Left ventricle myocardium superior (tissue), 1 donor: ENCODE measurements at regions of chrX and their contacts with region 1.

Region 1: DNA sequence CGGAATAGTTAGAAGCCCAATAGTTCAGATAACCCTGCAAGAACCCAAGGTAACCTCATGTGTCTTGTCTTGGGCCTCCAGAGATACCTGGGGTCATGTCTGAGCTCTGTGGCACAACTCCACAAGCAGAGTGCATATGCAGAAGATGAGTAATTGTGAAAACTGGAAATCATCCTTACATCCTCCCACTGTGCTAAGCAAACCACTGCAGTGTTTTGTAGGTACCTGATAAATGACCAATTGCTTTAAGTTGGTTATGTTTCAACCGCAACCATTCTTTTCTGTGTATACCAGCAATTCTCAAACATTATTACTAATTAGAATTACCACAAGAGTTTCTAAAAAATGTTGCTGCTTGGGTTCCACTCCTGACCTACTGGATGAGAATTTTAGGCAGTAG is 73.2 kb downstream of the CBLL2 start:
- DNase-seq: no peak
- ATAC-seq: no peak

Region 2: DNA sequence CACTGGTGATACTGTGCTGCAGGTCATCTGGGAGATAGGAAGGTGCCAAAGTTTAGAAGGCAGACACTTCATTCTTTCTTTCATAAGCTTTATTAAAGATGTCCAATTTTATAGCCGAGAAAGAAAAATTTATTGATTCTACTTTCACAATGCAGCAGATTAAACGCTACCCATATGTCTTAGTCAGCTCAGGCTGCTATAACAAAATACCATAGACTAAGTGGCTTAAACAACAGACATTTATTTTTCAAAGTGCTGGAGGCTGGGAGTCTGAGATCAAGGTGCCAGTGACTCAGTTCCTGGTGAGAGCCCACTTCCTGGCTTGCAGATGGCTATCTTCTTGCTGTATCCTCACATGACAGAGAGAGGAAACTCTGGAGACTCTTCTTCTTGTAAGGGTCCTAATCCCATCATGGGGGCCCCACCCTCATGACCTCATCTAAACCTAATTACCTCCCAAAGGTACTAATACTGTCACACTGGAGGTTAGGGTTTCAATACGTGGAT is 654.3 kb before region 1 on chrX:
- intact Hi-C with region 1: loop called (anchors 10 kb)
- DNase-seq: no peak
- ATAC-seq: no peak